ENCODE measurements at regions of chr17 and their contacts with region 1.

Region 1: GRCh38 chr17:18260332-18261144 is at the start of gene MIEF2:
- DNase-seq: peak; percentile 84
- ATAC-seq: peak; percentile 89
- H3K4me3 Mint-ChIP-seq: peak within 1 kb of the TSS; percentile 79
- H3K27ac Mint-ChIP-seq: peak within 1 kb of the TSS; percentile 77
- H3K4me1 Mint-ChIP-seq: peaks cover 38% of the 10 kb centered on the region
- H3K27me3 Mint-ChIP-seq: no peaks in the 10 kb centered on the region
- CTCF ChIP-seq: no peak
- total RNA-seq, gene MIEF2: 5.6 and 8.8 TPM in 2 replicates

Region 2: DNA sequence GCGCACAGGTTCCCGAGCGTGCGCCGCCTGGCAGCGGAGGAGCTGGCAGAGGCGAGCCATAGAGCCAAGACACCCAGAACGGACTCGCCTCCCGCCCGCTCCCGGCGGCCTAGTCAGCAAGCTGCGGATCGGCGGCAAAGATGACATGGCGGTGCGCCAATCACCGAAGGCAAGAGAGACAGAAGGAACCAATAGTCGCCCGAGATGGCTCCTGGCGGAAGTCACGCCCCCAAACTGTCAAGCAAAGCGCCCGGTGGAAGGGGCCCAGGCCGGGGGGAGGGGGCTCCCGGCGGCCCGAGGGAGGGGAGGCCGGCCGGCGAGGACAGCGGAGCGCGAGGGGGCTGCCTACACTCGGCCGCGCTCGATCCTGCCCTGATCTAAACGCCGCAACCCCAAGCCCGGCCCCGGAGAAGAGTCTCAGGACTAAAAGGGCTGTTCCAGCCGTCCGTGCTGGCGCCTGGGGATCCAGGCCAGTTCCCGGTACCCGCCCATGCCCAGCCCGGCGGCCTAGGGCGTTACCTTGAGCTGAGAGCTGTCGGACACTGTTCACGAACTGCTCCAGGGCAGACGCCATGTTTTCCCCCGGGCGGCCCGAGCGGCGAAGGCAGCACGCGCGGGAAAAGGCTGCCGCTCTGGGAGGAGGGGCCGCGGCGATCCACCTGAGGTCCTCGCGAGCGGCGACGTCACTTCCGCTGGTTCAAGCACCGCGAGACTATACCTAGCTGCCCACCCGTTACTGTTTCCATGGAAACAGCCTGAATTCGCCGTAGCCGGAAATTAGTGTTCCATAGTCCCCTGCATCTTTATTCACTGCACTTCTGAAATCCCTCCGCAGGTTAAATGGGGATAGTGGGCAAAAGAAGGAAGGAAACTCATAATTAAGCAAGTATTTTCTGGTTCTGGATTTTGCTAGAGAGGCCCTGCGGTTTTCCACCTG is 979.7 kb before region 1 on chr17 and contains the start of gene COPS3:
- CTCF ChIA-PET with region 1: no interaction called
- POLR2A ChIA-PET with region 1: no interaction called
- intact Hi-C with region 1: loop called (anchors 2 kb)
- DNase-seq: peak; percentile 95
- ATAC-seq: peak; percentile 87
- H3K4me3 Mint-ChIP-seq: peak within 1 kb of the TSS; percentile 80
- H3K27ac Mint-ChIP-seq: peak within 1 kb of the TSS; percentile 89
- H3K4me1 Mint-ChIP-seq: peaks cover 42% of the 10 kb centered on the region
- H3K27me3 Mint-ChIP-seq: no peaks in the 10 kb centered on the region
- CTCF ChIP-seq: no peak
- total RNA-seq, gene COPS3: 71.6 and 73.7 TPM in 2 replicates

Region 3: GRCh38 chr17:17739388-17740066 is 521.0 kb before region 1 on chr17:
- CTCF ChIA-PET with region 1: no interaction called
- POLR2A ChIA-PET with region 1: no interaction called
- intact Hi-C with region 1: loop called (anchors 5 kb)
- DNase-seq: no peak
- ATAC-seq: no peak
- H3K4me3 Mint-ChIP-seq: no peak overlapping the region
- H3K27ac Mint-ChIP-seq: peak overlapping the region; percentile 75
- H3K4me1 Mint-ChIP-seq: peaks cover 42% of the 10 kb centered on the region
- H3K27me3 Mint-ChIP-seq: no peaks in the 10 kb centered on the region
- CTCF ChIP-seq: no peak

Region 4: GRCh38 chr17:18225121-18225566 is 35.4 kb before region 1 on chr17:
- CTCF ChIA-PET with region 1: no interaction called
- POLR2A ChIA-PET with region 1: no interaction called
- intact Hi-C with region 1: loop called (anchors 1 kb)
- DNase-seq: peak; percentile 95
- ATAC-seq: peak; percentile 98
- H3K4me3 Mint-ChIP-seq: peak overlapping the region; percentile 38
- H3K27ac Mint-ChIP-seq: peak overlapping the region; percentile 12
- H3K4me1 Mint-ChIP-seq: peaks cover 9% of the 10 kb centered on the region
- H3K27me3 Mint-ChIP-seq: no peaks in the 10 kb centered on the region
- CTCF ChIP-seq: no peak

Region 5: DNA sequence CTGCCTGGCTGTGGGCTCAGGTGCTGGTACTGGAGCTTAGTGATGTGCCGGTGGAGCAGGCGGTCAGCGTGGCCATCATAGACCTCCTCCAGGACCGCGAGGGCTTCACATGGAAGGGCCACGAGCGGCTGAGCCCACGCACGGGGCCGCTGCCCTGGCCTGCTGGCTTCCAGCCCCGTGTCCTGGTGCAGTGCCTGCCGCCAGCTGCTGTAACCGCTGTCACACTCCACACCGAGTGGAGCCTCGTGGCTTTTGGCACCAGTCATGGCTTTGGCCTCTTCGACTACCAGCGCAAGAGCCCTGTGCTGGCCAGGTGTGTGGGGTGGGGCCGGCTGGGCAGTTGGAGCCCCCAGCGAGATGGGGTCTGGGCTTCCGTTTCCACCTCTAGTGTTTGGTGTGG is 23.1 kb before region 1 on chr17:
- CTCF ChIA-PET with region 1: no interaction called
- POLR2A ChIA-PET with region 1: no interaction called
- intact Hi-C with region 1: no loop called
- DNase-seq: no peak
- ATAC-seq: no peak
- H3K4me3 Mint-ChIP-seq: no peak overlapping the region
- H3K27ac Mint-ChIP-seq: no peak overlapping the region
- H3K4me1 Mint-ChIP-seq: no peaks in the 10 kb centered on the region
- H3K27me3 Mint-ChIP-seq: no peaks in the 10 kb centered on the region
- CTCF ChIP-seq: no peak

Region 6: GRCh38 chr17:18248300-18248731 is 12.2 kb before region 1 on chr17:
- CTCF ChIA-PET with region 1: no interaction called
- POLR2A ChIA-PET with region 1: no interaction called
- intact Hi-C with region 1: loop called (anchors 1 kb)
- DNase-seq: peak; percentile 47
- ATAC-seq: peak; percentile 82
- H3K4me3 Mint-ChIP-seq: no peak overlapping the region
- H3K27ac Mint-ChIP-seq: no peak overlapping the region
- H3K4me1 Mint-ChIP-seq: peaks cover 6% of the 10 kb centered on the region
- H3K27me3 Mint-ChIP-seq: no peaks in the 10 kb centered on the region
- CTCF ChIP-seq: no peak

Region 7: GRCh38 chr17:18314731-18315561 is 54.4 kb after region 1 on chr17 and contains the starts of genes SMCR8 and TOP3A:
- CTCF ChIA-PET with region 1: no interaction called
- POLR2A ChIA-PET with region 1: interaction called, 10 read pairs
- intact Hi-C with region 1: loop called (anchors 1 kb)
- DNase-seq: peak; percentile 91
- ATAC-seq: peak; percentile 94
- H3K4me3 Mint-ChIP-seq: peak within 1 kb of the TSS; percentile 100
- H3K27ac Mint-ChIP-seq: peak within 1 kb of the TSS; percentile 100
- H3K4me1 Mint-ChIP-seq: peaks cover 77% of the 10 kb centered on the region
- H3K27me3 Mint-ChIP-seq: no peaks in the 10 kb centered on the region
- CTCF ChIP-seq: no peak
- total RNA-seq, gene SMCR8: 32.5 and 36.9 TPM in 2 replicates
- total RNA-seq, gene TOP3A: 44.8 and 46.4 TPM in 2 replicates

Region 8: GRCh38 chr17:18363101-18364049 is 102.8 kb after region 1 on chr17 and contains the start of gene SHMT1:
- CTCF ChIA-PET with region 1: no interaction called
- POLR2A ChIA-PET with region 1: no interaction called
- intact Hi-C with region 1: loop called (anchors 1 kb)
- DNase-seq: peak; percentile 86
- ATAC-seq: peak; percentile 100
- H3K4me3 Mint-ChIP-seq: peak within 1 kb of the TSS; percentile 92
- H3K27ac Mint-ChIP-seq: peak within 1 kb of the TSS; percentile 71
- H3K4me1 Mint-ChIP-seq: peaks cover 17% of the 10 kb centered on the region
- H3K27me3 Mint-ChIP-seq: no peaks in the 10 kb centered on the region
- CTCF ChIP-seq: no peak
- total RNA-seq, gene SHMT1: 17.9 and 18.4 TPM in 2 replicates

Measured in activated B cell treated with CpG ODN at 0.5 μM for 24 hours (primary cell).